ENCODE measurements at regions of chr7 and their contacts with region 1.

Region 1: DNA sequence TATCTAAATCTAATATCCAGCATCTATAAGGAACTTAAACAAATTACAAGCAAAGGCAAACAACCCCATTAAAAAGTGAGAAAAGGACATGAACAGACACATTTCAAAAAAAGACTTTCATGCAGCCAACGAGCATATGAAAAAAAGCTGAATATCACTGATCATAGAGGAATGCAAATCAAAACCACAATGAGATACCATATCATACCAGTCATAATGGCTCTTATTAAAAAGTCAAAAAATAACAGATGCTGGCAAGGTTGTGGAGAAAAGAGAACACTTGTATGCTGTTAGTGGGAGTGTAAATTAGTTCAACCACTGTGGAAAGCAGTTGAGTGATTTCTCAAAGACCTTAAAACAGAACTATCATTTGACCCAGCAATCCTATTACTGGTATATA is 334.4 kb upstream of the CACNA2D1 start:
- DNase-seq: no peak
- ATAC-seq: no peak
- H3K4me3 ChIP-seq: no peak overlapping the region
- H3K27ac ChIP-seq: no peak overlapping the region
- H3K4me1 ChIP-seq: no peaks in the 10 kb centered on the region
- H3K27me3 ChIP-seq: no peaks in the 10 kb centered on the region
- CTCF ChIP-seq: no peak
- POLR2A ChIP-seq: no peak
- RAD21 ChIP-seq: no peak

Region 2: DNA sequence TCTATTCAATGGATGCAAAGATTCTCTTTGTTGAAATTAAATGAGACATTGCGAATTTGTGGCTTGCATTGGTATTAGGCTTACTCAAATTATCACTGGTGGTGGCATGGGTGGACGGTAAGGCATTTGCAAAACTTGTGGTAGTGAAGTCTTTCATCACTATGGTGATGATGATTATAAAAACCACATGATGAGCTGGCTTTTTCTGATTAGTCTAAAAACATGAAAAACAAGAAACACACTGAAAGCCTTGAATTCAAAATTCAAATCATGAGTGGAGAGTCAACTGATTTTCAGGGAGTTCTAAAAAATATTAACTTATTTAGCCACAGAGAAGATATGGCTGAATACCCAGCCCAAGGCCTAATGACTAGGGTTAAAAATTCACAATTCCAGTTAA is 908.4 kb before region 1 on chr7:
- CTCF ChIA-PET with region 1: no interaction called
- POLR2A ChIA-PET with region 1: no interaction called
- RAD21 ChIA-PET with region 1: no interaction called
- intact Hi-C with region 1: loop called (anchors 5 kb)
- DNase-seq: no peak
- ATAC-seq: no peak
- H3K4me3 ChIP-seq: no peak overlapping the region
- H3K27ac ChIP-seq: no peak overlapping the region
- H3K4me1 ChIP-seq: no peaks in the 10 kb centered on the region
- H3K27me3 ChIP-seq: no peaks in the 10 kb centered on the region
- CTCF ChIP-seq: no peak
- POLR2A ChIP-seq: no peak
- RAD21 ChIP-seq: no peak

Region 3: DNA sequence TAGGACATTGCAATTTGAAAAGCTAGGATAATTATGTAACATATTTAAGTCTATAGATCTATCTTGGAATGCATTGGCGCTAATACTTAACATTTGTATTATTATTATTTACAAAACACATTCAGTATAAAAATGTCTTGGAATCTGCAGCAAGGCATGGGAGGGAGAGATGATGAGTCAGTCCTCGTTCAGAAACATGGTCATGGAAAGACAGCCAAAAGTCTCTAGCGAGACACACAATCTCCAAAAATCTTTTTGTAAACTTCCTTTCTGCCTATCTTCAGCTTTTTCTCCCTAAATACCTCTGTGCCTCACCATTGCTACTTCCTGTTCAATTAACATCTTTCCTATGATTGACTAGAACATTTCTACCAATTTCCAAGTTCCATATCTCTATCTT is 146.0 kb before region 1 on chr7:
- CTCF ChIA-PET with region 1: no interaction called
- POLR2A ChIA-PET with region 1: no interaction called
- RAD21 ChIA-PET with region 1: no interaction called
- intact Hi-C with region 1: no loop called
- DNase-seq: no peak
- ATAC-seq: no peak
- H3K4me3 ChIP-seq: no peak overlapping the region
- H3K27ac ChIP-seq: no peak overlapping the region
- H3K4me1 ChIP-seq: no peaks in the 10 kb centered on the region
- H3K27me3 ChIP-seq: no peaks in the 10 kb centered on the region
- CTCF ChIP-seq: no peak
- POLR2A ChIP-seq: no peak
- RAD21 ChIP-seq: no peak

Region 4: DNA sequence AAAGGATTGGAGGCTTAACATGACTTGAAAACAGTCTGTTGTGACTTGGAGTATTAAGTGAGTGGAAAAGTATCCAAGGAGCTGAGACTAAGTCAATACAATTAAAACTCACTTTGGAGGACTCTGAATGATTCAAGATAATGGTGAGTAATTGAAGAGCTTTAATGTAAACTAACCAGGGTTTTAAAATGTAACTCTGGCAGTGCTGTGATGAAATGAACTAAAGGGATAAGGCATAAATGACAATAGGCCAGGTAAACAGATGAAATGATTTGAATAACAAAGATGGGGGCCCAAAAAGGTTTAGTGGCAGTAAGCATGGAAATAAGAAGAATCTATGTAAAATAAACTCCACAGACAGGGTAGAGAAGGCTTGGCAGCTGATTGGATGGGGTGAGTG is 17.9 kb before region 1 on chr7:
- CTCF ChIA-PET with region 1: no interaction called
- POLR2A ChIA-PET with region 1: no interaction called
- RAD21 ChIA-PET with region 1: no interaction called
- intact Hi-C with region 1: no loop called
- DNase-seq: no peak
- ATAC-seq: no peak
- H3K4me3 ChIP-seq: no peak overlapping the region
- H3K27ac ChIP-seq: no peak overlapping the region
- H3K4me1 ChIP-seq: no peaks in the 10 kb centered on the region
- H3K27me3 ChIP-seq: no peaks in the 10 kb centered on the region
- CTCF ChIP-seq: no peak
- POLR2A ChIP-seq: no peak
- RAD21 ChIP-seq: no peak